AG04449 (cell line): ENCODE measurements at regions of chr7 and their contacts with region 1.

Region 1: GRCh38 chr7:99918959-99919813 is at the start of gene TRIM4:
- DNase-seq: peak; percentile 60
- H3K4me3 ChIP-seq: peak within 1 kb of the TSS; percentile 87
- CTCF ChIP-seq: no peak

Region 2: GRCh38 chr7:99296471-99296870 is 622.7 kb before region 1 on chr7:
- CTCF ChIA-PET with region 1: no interaction called
- POLR2A ChIA-PET with region 1: no interaction called
- DNase-seq: no peak
- H3K4me3 ChIP-seq: no peak overlapping the region
- CTCF ChIP-seq: no peak

Region 3: DNA sequence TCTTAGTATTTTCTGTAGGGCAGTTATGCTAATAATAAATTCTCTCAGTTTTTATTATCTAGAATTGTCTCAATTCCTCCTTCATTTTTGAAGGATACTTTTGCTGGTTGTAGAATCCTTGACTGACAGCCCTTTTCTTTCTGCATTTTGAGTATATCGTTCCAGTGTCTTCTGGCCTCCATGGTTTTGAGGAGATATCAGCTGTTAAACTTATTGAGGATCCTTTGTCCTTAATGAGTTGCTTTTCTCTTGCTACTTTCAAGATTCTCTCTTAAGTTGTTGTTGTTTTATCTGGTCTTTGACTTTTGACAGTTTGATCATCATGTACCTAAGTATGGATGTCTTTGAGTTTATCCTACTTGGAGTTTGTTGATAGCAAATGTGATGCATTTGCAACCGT is 19.1 kb after region 1 on chr7:
- CTCF ChIA-PET with region 1: interaction called, 10 read pairs
- POLR2A ChIA-PET with region 1: interaction called, 4 read pairs
- DNase-seq: no peak
- H3K4me3 ChIP-seq: no peak overlapping the region
- CTCF ChIP-seq: no peak

Region 4: DNA sequence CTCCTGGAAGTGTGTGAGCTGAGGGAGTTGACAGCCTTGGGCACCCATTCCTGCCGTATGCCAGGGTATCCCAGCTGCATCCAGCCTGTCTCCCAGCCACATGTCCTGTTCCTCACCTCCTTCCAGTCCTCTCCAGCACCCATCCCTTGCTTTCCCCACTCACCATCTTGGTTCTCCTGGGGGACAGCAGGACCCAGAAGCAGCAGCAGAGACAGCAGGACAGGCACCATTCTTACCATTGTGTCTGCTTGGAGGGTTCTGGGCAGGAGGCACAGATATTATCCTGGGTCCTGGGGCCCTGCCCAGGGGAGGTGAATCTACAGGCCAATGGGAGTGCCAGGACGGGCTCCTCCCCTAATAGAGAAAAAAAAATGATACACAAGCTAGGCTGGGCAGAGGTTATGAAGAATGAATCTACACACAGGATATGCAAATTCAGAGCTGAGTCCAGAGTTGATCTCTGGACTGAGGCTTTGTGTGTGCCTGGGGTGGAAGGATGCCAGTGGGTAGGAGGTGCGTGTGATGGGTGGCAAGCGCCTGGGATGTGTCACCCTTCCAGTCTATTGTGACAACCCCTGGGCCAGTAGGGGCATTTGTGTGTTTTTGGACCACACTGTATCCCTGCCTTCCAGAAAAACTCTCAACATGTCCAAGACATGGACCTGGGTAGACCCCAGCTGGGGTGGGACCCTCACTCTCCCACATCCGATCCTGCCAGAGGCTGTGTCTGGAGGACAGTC is 56.8 kb after region 1 on chr7 and contains the start of gene AZGP1:
- CTCF ChIA-PET with region 1: interaction called, 18 read pairs
- POLR2A ChIA-PET with region 1: no interaction called
- DNase-seq: no peak
- H3K4me3 ChIP-seq: no peak within 1 kb of the TSS
- CTCF ChIP-seq: no peak

Region 5: DNA sequence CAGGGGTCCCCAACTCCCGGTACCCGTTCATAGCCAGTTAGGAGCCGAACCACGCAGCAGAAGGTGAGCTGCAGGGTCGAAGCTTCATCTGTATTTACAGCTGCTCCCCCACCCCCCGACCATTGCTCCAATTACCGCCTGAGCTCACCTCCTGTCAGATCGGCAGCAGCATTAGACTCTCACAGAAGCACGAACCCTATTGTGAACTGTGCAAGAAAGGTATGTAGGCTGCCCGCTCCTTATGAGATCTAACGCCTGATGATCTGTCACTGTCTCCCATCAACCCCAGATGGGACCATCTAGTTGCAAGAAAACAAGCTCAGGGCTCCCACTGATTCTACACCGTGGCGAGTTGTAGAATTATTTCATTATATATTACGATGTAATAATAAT is 71.3 kb after region 1 on chr7:
- CTCF ChIA-PET with region 1: interaction called, 190 read pairs
- POLR2A ChIA-PET with region 1: no interaction called
- DNase-seq: no peak
- H3K4me3 ChIP-seq: peak overlapping the region; percentile 38
- CTCF ChIP-seq: no peak

Region 6: DNA sequence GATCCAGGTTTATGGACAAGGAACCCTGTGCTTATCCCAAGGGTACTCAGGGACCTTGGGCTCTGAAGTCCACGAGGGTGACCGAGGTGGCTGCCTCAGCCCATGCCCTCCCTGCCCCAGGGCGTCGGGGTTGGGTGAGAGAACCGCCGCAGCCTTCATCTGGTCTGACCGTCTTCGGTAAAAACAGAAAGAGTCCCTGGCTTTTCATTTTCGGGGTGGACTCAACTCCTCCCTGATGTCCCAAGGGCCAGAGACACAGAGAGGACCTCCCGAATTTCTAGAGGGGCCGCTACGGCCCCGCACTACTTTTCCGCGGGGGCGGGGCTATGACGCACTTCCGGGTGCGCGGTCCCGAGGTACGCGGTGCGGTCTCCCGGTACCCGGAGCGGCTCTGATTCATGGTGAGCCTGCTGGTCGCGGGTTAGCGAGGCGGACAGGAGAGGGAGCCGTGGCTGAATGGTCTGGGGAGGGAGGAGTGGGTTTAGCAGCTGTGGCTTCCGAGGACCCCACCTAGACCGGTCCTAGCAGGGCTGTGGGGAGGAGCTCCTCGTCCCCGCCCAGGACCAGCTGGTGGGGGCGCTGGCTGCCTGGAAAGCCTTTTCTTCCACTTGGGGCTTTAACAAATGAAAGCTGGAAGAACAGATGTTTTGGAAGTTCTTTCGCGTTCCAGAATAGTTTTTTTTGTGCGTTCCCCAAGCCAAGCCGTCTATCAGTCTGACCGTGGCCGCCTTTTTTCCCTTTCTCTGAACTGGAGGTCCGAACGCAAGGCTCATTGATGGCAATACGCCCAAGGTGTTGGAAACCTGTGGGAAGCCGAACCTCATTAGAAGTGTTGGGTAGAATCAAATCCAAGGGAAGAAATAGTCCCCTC is 130.5 kb after region 1 on chr7 and contains the start of gene ZSCAN21:
- CTCF ChIA-PET with region 1: interaction called, 43 read pairs
- POLR2A ChIA-PET with region 1: no interaction called
- DNase-seq: no peak
- H3K4me3 ChIP-seq: peak within 1 kb of the TSS; percentile 96
- CTCF ChIP-seq: peak; percentile 25